ENCODE measurements at regions of chr9 and their contacts with region 1.

Region 1: GRCh38 chr9:431701-432100 is 217.0 kb downstream of the DOCK8 start:
- DNase-seq: no peak
- H3K4me3 Mint-ChIP-seq: no peak overlapping the region
- H3K27ac Mint-ChIP-seq: no peak overlapping the region
- H3K4me1 Mint-ChIP-seq: peaks cover 3% of the 10 kb centered on the region
- H3K27me3 Mint-ChIP-seq: no peaks in the 10 kb centered on the region
- CTCF ChIP-seq: no peak

Region 2: GRCh38 chr9:419571-420402 is 11.9 kb before region 1 on chr9:
- CTCF ChIA-PET with region 1: interaction called, 12 read pairs
- POLR2A ChIA-PET with region 1: interaction called, 34 read pairs
- intact Hi-C with region 1: no loop called
- DNase-seq: peak; percentile 46
- H3K4me3 Mint-ChIP-seq: peak overlapping the region; percentile 2
- H3K27ac Mint-ChIP-seq: peak overlapping the region; percentile 86
- H3K4me1 Mint-ChIP-seq: peaks cover 19% of the 10 kb centered on the region
- H3K27me3 Mint-ChIP-seq: no peaks in the 10 kb centered on the region
- CTCF ChIP-seq: no peak

Measured in MCF 10A (cell line).